ENCODE measurements at regions of chr5 and their contacts with region 1.

Region 1: GRCh38 chr5:159106569-159107282 is 7.0 kb upstream of the EBF1 start:
- DNase-seq: peak; percentile 59 to 95
- H3K4me3 ChIP-seq: no peak overlapping the region
- CTCF ChIP-seq: peak in 1 of 3 donors; percentile 55
- POLR2A ChIP-seq: no peak

Region 2: GRCh38 chr5:157342822-157343402 is 1763.8 kb before region 1 on chr5:
- intact Hi-C with region 1: no loop called
- DNase-seq: peak in 1 of 2 donors; percentile 70
- H3K4me3 ChIP-seq: no peak overlapping the region
- CTCF ChIP-seq: no peak
- POLR2A ChIP-seq: no peak

Region 3: DNA sequence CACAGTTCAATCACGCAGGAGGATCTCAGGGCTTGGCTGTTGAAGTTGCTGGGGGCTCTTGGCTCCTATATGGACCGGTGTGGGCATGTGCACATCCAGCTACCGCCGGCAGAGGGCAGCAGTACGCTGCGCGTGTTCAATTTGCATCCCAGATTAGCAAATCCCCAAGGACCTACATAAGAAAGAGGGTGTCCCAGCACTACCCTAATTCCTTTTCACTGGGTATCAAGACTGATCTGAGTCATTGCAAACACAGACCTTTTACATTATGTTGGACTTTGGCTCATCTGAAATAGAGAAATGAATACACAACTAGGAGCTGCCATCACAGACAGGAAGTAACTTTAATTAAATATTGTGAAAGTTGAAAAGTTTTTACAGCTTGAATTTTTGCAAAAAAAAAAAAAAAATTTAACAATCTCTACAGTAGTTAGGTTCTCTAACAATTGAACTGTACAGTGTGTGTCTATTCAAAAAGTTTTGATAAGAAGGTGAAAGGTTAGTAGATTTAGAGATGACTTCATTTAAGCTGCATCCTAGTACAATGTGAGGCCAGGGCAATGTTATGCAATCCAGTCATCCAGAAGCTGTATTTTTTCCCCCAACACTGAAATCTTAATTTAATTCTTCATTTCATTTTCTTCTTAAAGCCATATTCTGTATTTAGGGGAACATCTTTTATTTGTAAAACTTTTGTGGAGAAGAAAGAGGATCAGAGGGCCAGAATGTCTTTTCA is 411.0 kb before region 1 on chr5:
- intact Hi-C with region 1: loop called (anchors 5 kb)
- DNase-seq: peak; percentile 71 to 94
- H3K4me3 ChIP-seq: no peak overlapping the region
- CTCF ChIP-seq: peak in 1 of 3 donors; percentile 84
- POLR2A ChIP-seq: no peak

Region 4: DNA sequence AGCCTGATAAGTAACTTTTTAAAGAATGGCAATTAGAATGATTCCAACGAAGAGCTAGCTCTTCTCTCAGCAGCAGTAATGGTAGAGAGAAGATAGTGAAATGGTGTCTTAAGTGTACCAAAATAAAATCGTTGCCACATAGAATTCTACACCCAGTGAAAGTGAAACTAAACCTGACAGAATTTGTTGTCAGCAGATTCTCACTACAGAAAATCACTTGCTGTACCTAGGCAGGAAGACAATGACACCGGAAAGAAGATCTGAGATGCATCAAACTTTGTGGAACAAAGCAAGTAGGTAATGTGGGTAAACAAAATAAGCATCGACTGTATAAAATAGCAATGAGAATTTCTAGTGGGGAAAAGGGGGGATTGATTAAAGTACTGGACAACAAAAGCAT is 13.7 kb after region 1 on chr5:
- intact Hi-C with region 1: no loop called
- DNase-seq: no peak
- H3K4me3 ChIP-seq: no peak overlapping the region
- CTCF ChIP-seq: no peak
- POLR2A ChIP-seq: no peak